Colonic mucosa (tissue), 4 donors: ENCODE measurements at regions of chr13 and their contacts with region 1.

Region 1: DNA sequence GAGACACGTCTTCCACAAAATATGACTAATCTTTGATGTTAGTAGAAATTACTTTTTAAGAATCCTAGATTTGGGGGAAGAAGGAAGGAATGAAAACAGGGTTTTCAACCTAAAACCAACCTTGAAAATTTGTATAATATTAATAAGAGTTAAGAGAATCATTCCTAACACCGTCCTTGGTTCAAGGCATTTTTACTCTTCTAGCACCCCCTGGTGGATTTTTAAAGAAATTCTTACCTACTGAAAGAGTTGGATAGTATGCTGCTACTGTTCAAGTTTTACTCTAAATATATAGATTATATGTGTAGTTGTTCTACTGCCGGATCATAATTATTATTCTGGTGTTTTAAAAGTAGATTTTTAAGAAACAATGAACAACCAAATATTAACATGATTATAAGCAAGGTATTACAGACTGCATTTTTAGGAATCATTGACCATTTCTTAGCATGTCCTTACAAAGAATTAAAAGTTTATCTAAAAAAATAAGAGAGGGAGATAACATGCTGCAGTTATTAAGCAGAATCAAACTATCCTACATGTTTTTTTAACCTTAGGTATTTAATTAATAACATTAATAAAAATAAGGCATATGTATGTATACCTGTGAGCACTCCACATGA is 7.4 kb upstream of the SLITRK6 start:
- DNase-seq: no peak
- H3K4me3 ChIP-seq: no peak overlapping the region
- H3K27ac ChIP-seq: no peak overlapping the region
- H3K4me1 ChIP-seq: no peaks in the 10 kb centered on the region
- H3K27me3 ChIP-seq: no peaks in the 10 kb centered on the region
- CTCF ChIP-seq: peak; percentile 58

Region 2: DNA sequence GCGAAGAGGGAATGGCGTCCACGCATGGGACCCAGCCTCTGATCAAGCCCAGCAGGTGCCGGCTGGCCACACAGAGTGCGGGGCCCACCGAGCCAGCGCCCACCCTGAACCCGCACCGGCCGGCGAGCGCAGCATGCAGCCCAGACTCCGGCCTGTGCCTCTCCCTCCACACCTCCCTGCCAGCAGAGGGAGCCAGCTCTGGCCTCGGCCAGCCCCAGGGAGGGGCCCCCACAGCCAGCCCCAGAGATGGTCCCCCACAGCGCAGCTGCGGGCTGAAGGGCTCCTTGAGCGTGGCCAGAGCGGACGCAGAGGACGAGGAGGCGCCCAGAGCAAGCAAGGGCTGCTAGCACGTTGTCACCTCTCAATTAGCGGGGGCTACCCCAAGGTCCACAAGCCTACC is 911.9 kb before region 1 on chr13:
- intact Hi-C with region 1: loop called (anchors 5 kb)
- DNase-seq: no peak
- H3K4me3 ChIP-seq: no peak overlapping the region
- H3K27ac ChIP-seq: no peak overlapping the region
- H3K4me1 ChIP-seq: no peaks in the 10 kb centered on the region
- H3K27me3 ChIP-seq: no peaks in the 10 kb centered on the region
- CTCF ChIP-seq: no peak

Region 3: DNA sequence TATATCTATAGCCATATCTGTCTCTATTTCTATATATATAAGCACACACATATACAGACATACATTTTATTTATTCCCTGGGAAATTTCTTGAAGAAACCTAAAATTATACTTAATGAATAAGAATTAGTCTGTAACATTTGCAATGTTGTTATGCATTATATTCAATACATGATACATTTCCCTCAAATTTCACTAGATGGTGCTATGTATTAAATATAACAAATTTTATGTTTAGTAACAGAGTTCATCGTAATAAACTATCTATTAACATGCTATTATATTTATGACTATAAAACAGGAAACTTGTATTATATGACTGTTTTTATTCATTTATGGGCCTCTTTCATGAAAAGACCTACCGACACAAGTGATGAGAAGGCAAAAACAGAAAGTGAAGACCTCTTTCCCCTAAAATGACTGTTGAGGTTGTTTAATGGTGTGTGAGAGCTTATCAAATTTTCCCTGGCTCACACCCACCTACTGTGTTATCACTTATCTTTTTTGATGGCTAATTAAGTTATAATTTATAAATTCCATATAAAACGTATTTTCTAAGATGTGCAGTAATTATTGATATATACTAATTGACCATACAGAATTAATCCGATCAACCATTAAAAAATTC is 889.3 kb before region 1 on chr13:
- intact Hi-C with region 1: loop called (anchors 2 kb)
- DNase-seq: no peak
- H3K4me3 ChIP-seq: no peak overlapping the region
- H3K27ac ChIP-seq: no peak overlapping the region
- H3K4me1 ChIP-seq: no peaks in the 10 kb centered on the region
- H3K27me3 ChIP-seq: no peaks in the 10 kb centered on the region
- CTCF ChIP-seq: peak; percentile 30